Heart right ventricle (tissue), 16 donors: ENCODE measurements at regions of chr10 and their contacts with region 1.

Region 1: GRCh38 chr10:88260329-88261051 is 322.6 kb downstream of the RNLS start:
- DNase-seq: no peak
- ATAC-seq: no peak
- H3K4me3 ChIP-seq: no peak overlapping the region
- H3K27ac ChIP-seq: no peak overlapping the region
- H3K4me1 ChIP-seq: peaks cover 0 to 17% (median 0%) of the 10 kb centered on the region in 9 donors
- H3K27me3 ChIP-seq: no peaks in the 10 kb centered on the region
- CTCF ChIP-seq: no peak

Region 2: DNA sequence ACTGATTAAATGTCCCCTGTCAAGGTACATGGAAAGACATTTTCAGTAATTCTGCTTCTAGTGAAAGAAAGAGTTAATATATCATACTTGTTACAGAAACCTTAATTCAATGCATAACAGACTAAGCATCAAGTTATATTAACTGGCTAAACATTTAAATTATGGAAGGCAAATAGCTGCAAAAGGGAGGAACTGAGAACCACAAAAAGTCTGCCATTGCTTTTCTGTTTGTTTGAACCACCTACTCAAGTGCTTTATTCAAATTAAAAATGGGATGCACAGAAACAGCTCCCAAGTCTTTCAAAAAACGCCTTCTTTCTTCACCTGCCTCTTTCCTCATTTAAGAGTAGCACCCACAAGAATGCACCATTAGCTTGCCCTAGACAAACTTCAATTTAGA is 50.8 kb after region 1 on chr10:
- intact Hi-C with region 1: loop called in 1 of 10 experiments (anchors 2 kb)
- DNase-seq: no peak
- ATAC-seq: no peak
- H3K4me3 ChIP-seq: no peak overlapping the region
- H3K27ac ChIP-seq: no peak overlapping the region
- H3K4me1 ChIP-seq: peaks cover 0 to 4% (median 0%) of the 10 kb centered on the region in 9 donors
- H3K27me3 ChIP-seq: no peaks in the 10 kb centered on the region
- CTCF ChIP-seq: no peak

Region 3: GRCh38 chr10:88322324-88323063 is 62.0 kb after region 1 on chr10:
- intact Hi-C with region 1: no loop called
- DNase-seq: no peak
- ATAC-seq: no peak
- H3K4me3 ChIP-seq: no peak overlapping the region
- H3K27ac ChIP-seq: no peak overlapping the region
- H3K4me1 ChIP-seq: no peaks in the 10 kb centered on the region
- H3K27me3 ChIP-seq: no peaks in the 10 kb centered on the region
- CTCF ChIP-seq: no peak